Mammary epithelial cell (primary cell): ENCODE measurements at regions of chr17 and their contacts with region 1.

Region 1: DNA sequence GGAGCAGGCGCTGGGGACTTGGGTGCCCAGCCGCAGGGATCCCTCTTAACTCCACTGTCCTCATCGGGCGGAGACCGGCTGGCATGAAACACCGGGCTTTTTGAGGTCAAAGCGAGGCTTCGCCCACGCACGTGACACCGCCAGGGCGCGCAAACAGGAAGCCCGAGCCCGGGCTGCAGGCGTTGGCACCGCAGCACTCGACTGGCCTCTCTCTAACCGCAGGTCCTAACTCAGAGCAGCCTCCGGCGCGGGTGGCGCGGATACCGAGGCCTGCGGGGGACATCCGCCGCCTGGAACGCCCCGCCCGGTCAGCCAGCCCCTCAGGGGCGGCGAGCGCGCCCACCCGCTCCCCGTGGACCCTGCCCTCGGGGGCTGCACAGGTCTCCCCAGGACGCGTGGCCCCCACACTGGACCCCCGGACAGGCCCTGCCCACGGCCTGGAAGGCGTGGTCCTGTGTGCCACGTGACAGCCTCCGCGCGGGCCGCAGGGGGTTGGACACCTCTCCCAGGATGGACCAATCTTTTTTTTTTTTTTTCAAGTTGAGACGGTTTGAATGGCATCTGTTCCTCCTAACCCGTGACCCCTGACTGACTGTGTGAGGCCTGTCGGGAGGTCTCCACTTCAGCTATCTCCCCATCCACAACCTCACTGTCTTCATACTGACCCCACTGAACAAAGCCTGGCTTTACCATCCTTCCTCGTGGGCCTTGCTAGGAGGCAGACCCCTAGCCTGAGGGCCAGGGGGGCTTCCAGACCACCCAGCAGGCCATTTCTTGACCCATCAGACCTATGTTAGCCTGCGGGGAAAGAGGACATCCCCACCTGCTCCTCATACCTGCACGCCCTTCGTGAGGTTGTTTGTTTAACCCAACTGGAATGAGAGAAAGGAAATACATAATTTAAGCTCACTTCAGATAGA is 8.4 kb upstream of the SLC47A2 start:
- DNase-seq: peak; percentile 75
- H3K4me3 ChIP-seq: no peak overlapping the region
- H3K27ac ChIP-seq: peak overlapping the region; percentile 72
- H3K4me1 ChIP-seq: peaks cover 53% of the 10 kb centered on the region
- H3K27me3 ChIP-seq: no peaks in the 10 kb centered on the region
- CTCF ChIP-seq: no peak

Region 2: GRCh38 chr17:19706791-19707727 is 17.7 kb before region 1 on chr17:
- CTCF ChIA-PET with region 1: no interaction called
- dilution Hi-C with region 1: no loop called
- in situ Hi-C with region 1: no loop called
- intact Hi-C with region 1: loop called (anchors 2 kb)
- DNase-seq: peak; percentile 68
- H3K4me3 ChIP-seq: no peak overlapping the region
- H3K27ac ChIP-seq: no peak overlapping the region
- H3K4me1 ChIP-seq: peaks cover 20% of the 10 kb centered on the region
- H3K27me3 ChIP-seq: no peaks in the 10 kb centered on the region
- CTCF ChIP-seq: no peak

Region 3: GRCh38 chr17:19787733-19788357 is 63.1 kb after region 1 on chr17:
- CTCF ChIA-PET with region 1: no interaction called
- dilution Hi-C with region 1: no loop called
- in situ Hi-C with region 1: no loop called
- intact Hi-C with region 1: no loop called
- DNase-seq: peak; percentile 6
- H3K4me3 ChIP-seq: no peak overlapping the region
- H3K27ac ChIP-seq: no peak overlapping the region
- H3K4me1 ChIP-seq: no peaks in the 10 kb centered on the region
- H3K27me3 ChIP-seq: no peaks in the 10 kb centered on the region
- CTCF ChIP-seq: no peak